ENCODE measurements at regions of chr16 and their contacts with region 1.

Region 1: GRCh38 chr16:50266337-50267091 is at the start of gene ADCY7:
- DNase-seq: peak; percentile 57 to 84 (median 77)
- ATAC-seq: peak; percentile 90
- H3K4me3 ChIP-seq: peak within 1 kb of the TSS; percentile 87
- H3K4me3 Mint-ChIP-seq: peak within 1 kb of the TSS; percentile 83 to 98 (median 96)
- H3K27ac ChIP-seq: peak within 1 kb of the TSS; percentile 85
- H3K27ac Mint-ChIP-seq: peak within 1 kb of the TSS; percentile 77 to 99 (median 97)
- H3K4me1 ChIP-seq: peaks cover 41 to 46% of the 10 kb centered on the region in 2 donors
- H3K4me1 Mint-ChIP-seq: peaks cover 56 to 76% (median 60%) of the 10 kb centered on the region in 7 donors
- H3K27me3 ChIP-seq: no peaks in the 10 kb centered on the region
- H3K27me3 Mint-ChIP-seq: no peaks in the 10 kb centered on the region
- total RNA-seq, gene ADCY7: 179 to 326 (median 208) TPM

Region 2: DNA sequence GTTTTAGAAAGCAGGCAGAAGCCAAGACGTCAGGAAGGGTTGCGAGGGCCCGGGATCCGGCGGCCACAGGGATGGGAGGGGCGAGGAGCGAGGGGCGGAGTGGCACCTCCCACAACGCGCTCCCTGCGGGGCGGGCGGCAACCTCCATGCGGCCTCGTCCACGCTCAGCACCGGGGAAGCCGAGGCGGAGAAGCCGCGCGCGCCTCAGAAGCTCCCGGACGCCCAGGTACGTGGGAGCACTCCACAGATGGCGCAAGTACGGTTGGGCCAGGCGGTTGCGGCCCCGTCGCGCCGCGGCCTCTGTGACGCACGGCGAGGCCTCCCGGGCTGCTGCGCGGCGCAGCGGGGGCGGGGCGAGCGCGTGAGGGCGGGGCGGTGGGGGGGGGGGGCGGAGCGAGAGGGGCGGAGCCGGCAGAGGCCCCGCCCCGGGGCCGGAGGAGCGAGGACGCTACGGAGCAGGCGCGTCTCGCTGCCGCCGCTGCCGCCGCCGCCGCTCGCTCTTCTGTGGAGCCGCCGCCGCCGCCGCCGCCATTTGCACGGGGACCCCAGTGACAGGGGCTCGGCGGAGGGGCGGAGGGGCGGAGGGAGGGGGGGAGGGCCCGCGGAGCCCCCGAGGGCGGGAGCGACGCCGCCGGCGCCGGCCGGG is 113.6 kb before region 1 on chr16 and contains the start of gene TENT4B:
- CTCF ChIA-PET with region 1: no interaction called
- POLR2A ChIA-PET with region 1: interaction called, 7 read pairs
- intact Hi-C with region 1: loop called (anchors 2 kb)
- DNase-seq: peak; percentile 87 to 97 (median 96)
- ATAC-seq: peak; percentile 88
- H3K4me3 ChIP-seq: peak within 1 kb of the TSS; percentile 87
- H3K4me3 Mint-ChIP-seq: peak within 1 kb of the TSS; percentile 87 to 99 (median 94)
- H3K27ac ChIP-seq: peak within 1 kb of the TSS; percentile 99
- H3K27ac Mint-ChIP-seq: peak within 1 kb of the TSS; percentile 93 to 99 (median 97)
- H3K4me1 ChIP-seq: peaks cover 16 to 30% of the 10 kb centered on the region in 2 donors
- H3K4me1 Mint-ChIP-seq: peaks cover 28 to 44% (median 40%) of the 10 kb centered on the region in 7 donors
- H3K27me3 ChIP-seq: no peaks in the 10 kb centered on the region
- H3K27me3 Mint-ChIP-seq: no peaks in the 10 kb centered on the region
- total RNA-seq, gene TENT4B: 18.8 to 25.9 (median 23.8) TPM

Region 3: GRCh38 chr16:50313596-50314478 is 47.3 kb after region 1 on chr16:
- CTCF ChIA-PET with region 1: interaction called, 11 read pairs
- POLR2A ChIA-PET with region 1: interaction called, 8 read pairs
- intact Hi-C with region 1: loop called in 1 of 2 experiments (anchors 1 kb)
- DNase-seq: peak in 8 of 9 donors; percentile 25 to 48 (median 35)
- ATAC-seq: peak; percentile 88
- H3K4me3 ChIP-seq: no peak overlapping the region
- H3K4me3 Mint-ChIP-seq: peak overlapping the region; percentile 6 to 72 (median 52)
- H3K27ac ChIP-seq: peak overlapping the region; percentile 43
- H3K27ac Mint-ChIP-seq: peak overlapping the region; percentile 81 to 93 (median 89)
- H3K4me1 ChIP-seq: no peaks in the 10 kb centered on the region
- H3K4me1 Mint-ChIP-seq: peaks cover 14 to 36% (median 25%) of the 10 kb centered on the region in 7 donors
- H3K27me3 ChIP-seq: no peaks in the 10 kb centered on the region
- H3K27me3 Mint-ChIP-seq: no peaks in the 10 kb centered on the region

Region 4: GRCh38 chr16:50354629-50355456 is 88.3 kb after region 1 on chr16:
- CTCF ChIA-PET with region 1: interaction called, 36 read pairs
- POLR2A ChIA-PET with region 1: interaction called, 6 read pairs
- intact Hi-C with region 1: loop called in 1 of 2 experiments (anchors 1 kb)
- DNase-seq: peak in 5 of 9 donors; percentile 32 to 63 (median 51)
- ATAC-seq: peak; percentile 68
- H3K4me3 ChIP-seq: no peak overlapping the region
- H3K4me3 Mint-ChIP-seq: peak overlapping the region in 1 of 10 donors; percentile 21
- H3K27ac ChIP-seq: peak overlapping the region; percentile 31
- H3K27ac Mint-ChIP-seq: peak overlapping the region in 8 of 9 donors; percentile 2 to 91 (median 68)
- H3K4me1 ChIP-seq: no peaks in the 10 kb centered on the region
- H3K4me1 Mint-ChIP-seq: peaks cover 9 to 41% (median 25%) of the 10 kb centered on the region in 7 donors
- H3K27me3 ChIP-seq: no peaks in the 10 kb centered on the region
- H3K27me3 Mint-ChIP-seq: no peaks in the 10 kb centered on the region

Region 5: GRCh38 chr16:50665128-50665878 is 398.8 kb after region 1 on chr16:
- CTCF ChIA-PET with region 1: interaction called, 4 read pairs
- POLR2A ChIA-PET with region 1: interaction called, 3 read pairs
- intact Hi-C with region 1: loop called in 1 of 2 experiments (anchors 1 kb)
- DNase-seq: peak; percentile 71 to 90 (median 77)
- ATAC-seq: peak; percentile 80
- H3K4me3 ChIP-seq: peak overlapping the region; percentile 60
- H3K4me3 Mint-ChIP-seq: peak overlapping the region; percentile 73 to 87 (median 84)
- H3K27ac ChIP-seq: peak overlapping the region; percentile 62
- H3K27ac Mint-ChIP-seq: peak overlapping the region; percentile 82 to 97 (median 89)
- H3K4me1 ChIP-seq: peaks cover 17% of the 10 kb centered on the region in 2 donors
- H3K4me1 Mint-ChIP-seq: peaks cover 28 to 49% (median 44%) of the 10 kb centered on the region in 7 donors
- H3K27me3 ChIP-seq: no peaks in the 10 kb centered on the region
- H3K27me3 Mint-ChIP-seq: no peaks in the 10 kb centered on the region

Measured in naive thymus-derived CD4-positive, alpha-beta T cell (primary cell).